Left ventricle myocardium superior (tissue), 1 donor: ENCODE measurements at regions of chr4 and their contacts with region 1.

Region 1: GRCh38 chr4:176163041-176163440 is 32.3 kb downstream of the SPATA4 start:
- DNase-seq: no peak
- ATAC-seq: no peak

Region 2: DNA sequence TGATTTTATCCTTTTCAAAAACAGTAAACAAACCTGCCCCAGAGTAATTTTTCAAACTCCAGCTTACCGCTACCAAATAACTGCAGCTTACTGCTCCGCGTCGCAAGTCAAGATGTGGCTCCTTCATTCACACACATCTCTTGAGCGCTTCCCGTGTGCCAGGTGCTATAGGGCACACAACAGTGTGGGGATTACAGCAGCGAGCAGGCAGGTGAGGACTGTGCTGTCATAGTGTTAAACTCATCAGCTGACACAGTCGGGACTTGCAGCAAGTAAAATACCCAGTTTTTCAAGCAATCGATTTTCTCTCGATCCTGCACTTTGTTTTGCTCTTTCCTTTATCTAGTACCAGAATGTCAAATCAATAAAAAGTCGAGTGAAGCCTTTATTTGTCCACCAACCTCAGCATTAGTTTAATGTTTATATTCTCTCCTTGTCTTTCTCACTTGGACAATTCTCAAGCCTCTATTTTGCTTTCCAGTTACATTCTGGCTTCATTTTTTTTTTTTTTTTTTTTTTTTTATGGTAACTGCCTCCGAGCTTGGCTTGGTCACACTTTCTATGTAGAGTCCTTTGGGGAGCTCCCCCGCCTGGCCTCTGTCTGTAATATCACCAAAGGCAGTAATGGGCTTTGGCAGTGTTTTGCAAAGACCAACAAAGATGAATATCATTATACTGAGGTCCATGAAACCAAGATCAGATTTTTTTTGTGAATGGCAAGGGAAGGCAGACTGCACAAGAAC is 114.3 kb after region 1 on chr4:
- intact Hi-C with region 1: loop called (anchors 5 kb)
- DNase-seq: peak; percentile 65
- ATAC-seq: peak; percentile 84